B cell (primary cell): ENCODE measurements at regions of chr19 and their contacts with region 1.

Region 1: DNA sequence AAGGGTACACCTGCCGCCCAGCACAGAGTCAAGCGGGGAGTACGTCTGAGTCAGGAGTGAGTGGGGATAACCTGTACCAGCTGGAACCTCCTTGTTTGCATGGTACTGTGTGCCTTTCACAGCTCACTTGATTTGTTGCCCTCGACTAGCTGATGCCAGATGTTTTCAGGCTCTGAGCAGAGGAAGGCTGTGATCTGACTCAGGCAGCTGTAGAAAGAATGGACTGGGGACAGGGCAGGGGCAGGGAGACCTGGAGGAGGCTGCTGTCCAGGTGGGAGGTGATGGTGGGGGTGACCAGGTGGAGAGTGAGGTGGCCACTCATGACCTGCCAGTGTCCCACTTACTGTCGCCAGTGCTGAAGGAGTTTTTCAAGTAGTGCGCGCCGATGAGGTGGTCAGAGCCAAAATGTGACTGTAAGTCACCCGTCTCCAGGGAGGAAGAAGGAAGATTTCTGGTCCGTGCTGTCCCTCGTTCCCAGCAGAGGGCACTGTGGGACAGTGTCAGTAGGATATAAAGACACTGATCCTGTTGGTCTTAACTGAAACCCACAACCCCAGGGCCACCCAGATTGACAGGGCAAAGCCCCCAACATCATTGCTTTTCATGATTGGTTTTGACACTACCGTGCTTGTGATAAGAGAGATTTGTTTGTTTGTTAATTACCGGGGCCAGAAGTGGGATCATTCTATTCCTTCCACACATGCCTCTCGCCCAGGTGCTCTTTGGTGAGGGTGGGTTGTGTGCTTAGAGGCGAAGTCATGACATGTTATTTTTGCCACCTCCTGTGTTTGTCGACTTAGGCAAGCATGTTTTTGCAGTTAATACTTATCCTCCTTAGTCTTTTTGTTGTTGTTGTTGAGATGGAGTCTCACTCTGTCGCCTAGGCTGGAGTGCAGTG is 128.4 kb downstream of the DPF1 start:
- DNase-seq: peak; percentile 78
- ATAC-seq: peak; percentile 81
- H3K4me3 ChIP-seq: no peak overlapping the region
- H3K4me3 Mint-ChIP-seq: peak overlapping the region; percentile 11
- H3K27ac ChIP-seq: peak overlapping the region; percentile 18 to 69
- H3K27ac Mint-ChIP-seq: peak overlapping the region; percentile 90
- H3K4me1 ChIP-seq: peaks cover 7 to 12% of the 10 kb centered on the region in 2 donors
- H3K4me1 Mint-ChIP-seq: peaks cover 21% of the 10 kb centered on the region
- H3K27me3 ChIP-seq: no peaks in the 10 kb centered on the region
- H3K27me3 Mint-ChIP-seq: no peaks in the 10 kb centered on the region
- CTCF ChIP-seq: peak; percentile 73

Region 2: DNA sequence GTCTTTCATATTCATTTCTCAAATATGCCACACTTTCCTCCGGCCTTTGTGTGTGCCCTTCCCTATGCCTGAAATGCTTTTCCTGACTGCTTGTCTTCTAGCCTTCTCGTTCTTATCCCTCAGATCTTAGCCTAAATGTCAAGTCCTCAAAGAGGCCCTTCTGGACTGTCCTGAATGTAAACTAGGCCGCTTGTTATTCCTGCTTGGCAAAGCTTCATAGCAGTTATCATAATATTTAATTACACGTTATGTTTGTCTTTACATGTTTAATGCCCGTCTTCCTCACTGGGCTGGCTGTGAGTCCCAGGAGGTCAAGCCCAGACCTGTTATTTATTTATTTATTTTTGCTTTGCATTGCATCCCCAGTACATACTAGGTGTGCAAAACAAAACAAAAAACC is 126.0 kb before region 1 on chr19:
- CTCF ChIA-PET with region 1: interaction called, 11 read pairs
- POLR2A ChIA-PET with region 1: interaction called, 8 read pairs
- intact Hi-C with region 1: loop called (anchors 5 kb)
- DNase-seq: no peak
- ATAC-seq: no peak
- H3K4me3 ChIP-seq: no peak overlapping the region
- H3K4me3 Mint-ChIP-seq: no peak overlapping the region
- H3K27ac ChIP-seq: peak overlapping the region in 1 of 2 donors; percentile 17
- H3K27ac Mint-ChIP-seq: peak overlapping the region; percentile 64
- H3K4me1 ChIP-seq: peaks cover 41 to 53% of the 10 kb centered on the region in 2 donors
- H3K4me1 Mint-ChIP-seq: peaks cover 60% of the 10 kb centered on the region
- H3K27me3 ChIP-seq: no peaks in the 10 kb centered on the region
- H3K27me3 Mint-ChIP-seq: no peaks in the 10 kb centered on the region
- CTCF ChIP-seq: no peak

Region 3: DNA sequence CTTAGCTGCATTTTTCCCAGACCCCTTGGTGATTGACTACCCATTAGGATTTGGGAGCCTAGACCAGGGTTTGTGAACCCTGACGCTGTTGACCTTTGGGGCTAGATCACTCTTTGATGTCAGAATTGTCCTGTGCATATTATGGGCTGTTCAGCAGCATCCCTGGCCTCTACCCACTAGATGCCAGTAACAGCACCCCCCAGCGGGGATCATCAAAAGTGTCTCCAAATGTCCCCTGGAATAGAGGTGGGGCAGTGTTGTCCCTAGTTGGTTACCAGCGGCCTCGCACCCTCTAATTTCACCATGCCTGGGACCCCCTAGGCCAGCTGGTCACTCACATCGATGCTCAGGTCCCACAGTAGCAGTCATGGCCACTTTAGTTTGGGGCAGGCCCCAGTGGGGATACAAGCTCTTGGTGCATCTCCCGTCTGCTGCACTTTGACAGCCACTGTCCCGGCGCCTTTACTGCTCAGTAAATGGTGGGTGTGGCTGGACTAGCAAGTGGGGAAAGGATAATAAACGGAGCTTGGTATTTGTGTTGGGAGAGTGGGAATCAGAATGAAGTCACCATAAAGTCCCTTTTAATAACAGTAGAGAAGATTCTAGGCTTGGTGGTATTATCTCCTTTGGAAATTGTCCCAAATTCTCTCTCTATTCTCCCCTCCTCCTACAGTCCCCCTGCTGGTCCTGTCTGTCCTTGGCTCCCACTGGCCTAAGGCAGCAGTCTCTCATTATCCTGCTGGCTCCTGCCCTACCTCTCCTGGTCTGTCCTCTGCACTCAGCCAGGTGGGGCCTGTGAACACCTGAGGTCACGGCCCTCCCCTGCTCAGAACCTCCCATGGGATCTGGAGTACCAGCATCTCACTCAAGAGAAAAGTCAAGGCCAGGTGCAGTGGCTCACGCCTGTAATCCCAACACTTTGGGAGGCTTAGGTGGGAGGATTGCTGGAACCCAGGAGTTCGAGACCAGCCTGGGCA is 108.0 kb before region 1 on chr19:
- CTCF ChIA-PET with region 1: interaction called, 4 read pairs
- POLR2A ChIA-PET with region 1: no interaction called
- intact Hi-C with region 1: loop called (anchors 1 kb)
- DNase-seq: no peak
- ATAC-seq: no peak
- H3K4me3 ChIP-seq: no peak overlapping the region
- H3K4me3 Mint-ChIP-seq: no peak overlapping the region
- H3K27ac ChIP-seq: peak overlapping the region; percentile 88 to 93
- H3K27ac Mint-ChIP-seq: peak overlapping the region; percentile 99
- H3K4me1 ChIP-seq: peaks cover 75 to 91% of the 10 kb centered on the region in 2 donors
- H3K4me1 Mint-ChIP-seq: peaks cover 85% of the 10 kb centered on the region
- H3K27me3 ChIP-seq: no peaks in the 10 kb centered on the region
- H3K27me3 Mint-ChIP-seq: no peaks in the 10 kb centered on the region
- CTCF ChIP-seq: no peak

Region 4: GRCh38 chr19:38057959-38058710 is 37.5 kb before region 1 on chr19:
- CTCF ChIA-PET with region 1: interaction called, 14 read pairs
- POLR2A ChIA-PET with region 1: no interaction called
- intact Hi-C with region 1: no loop called
- DNase-seq: no peak
- ATAC-seq: no peak
- H3K4me3 ChIP-seq: no peak overlapping the region
- H3K4me3 Mint-ChIP-seq: peak overlapping the region; percentile 45
- H3K27ac ChIP-seq: peak overlapping the region; percentile 42 to 75
- H3K27ac Mint-ChIP-seq: peak overlapping the region; percentile 92
- H3K4me1 ChIP-seq: peaks cover 27 to 50% of the 10 kb centered on the region in 2 donors
- H3K4me1 Mint-ChIP-seq: peaks cover 60% of the 10 kb centered on the region
- H3K27me3 ChIP-seq: no peaks in the 10 kb centered on the region
- H3K27me3 Mint-ChIP-seq: no peaks in the 10 kb centered on the region
- CTCF ChIP-seq: no peak

Region 5: DNA sequence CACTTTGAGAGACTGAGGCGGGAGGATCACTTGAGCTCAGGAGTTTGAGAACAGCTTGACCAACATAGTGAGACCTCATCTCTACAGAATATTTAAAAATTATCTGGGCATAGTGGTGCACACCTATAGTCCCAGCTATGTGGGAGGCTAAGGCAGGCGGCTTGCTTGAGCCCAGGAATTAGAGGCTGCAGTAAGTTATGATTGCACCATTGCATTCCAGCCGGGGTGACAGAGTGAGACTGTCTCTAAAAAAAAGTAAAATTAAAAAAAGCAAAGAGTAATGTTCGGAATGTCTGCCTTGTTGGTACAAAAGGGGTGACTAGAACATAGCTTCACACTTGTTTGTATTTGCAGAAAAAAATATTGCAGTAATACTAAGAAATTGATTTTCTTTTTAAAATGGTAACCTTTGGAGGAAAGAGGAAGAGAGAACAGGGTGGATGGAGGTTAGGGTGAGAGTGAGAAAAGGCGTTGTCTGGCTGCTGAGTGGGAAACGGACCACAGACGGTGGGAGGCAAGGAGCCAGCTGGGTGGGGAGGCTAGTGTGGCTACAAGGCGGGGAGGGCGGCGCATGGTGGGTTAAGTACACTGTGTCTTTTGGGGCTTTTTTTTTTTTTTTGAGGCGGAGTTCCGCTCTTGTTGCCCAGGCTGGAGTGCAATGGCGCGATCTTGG is 150.3 kb after region 1 on chr19:
- CTCF ChIA-PET with region 1: no interaction called
- POLR2A ChIA-PET with region 1: interaction called, 12 read pairs
- intact Hi-C with region 1: no loop called
- DNase-seq: no peak
- ATAC-seq: no peak
- H3K4me3 ChIP-seq: no peak overlapping the region
- H3K4me3 Mint-ChIP-seq: no peak overlapping the region
- H3K27ac ChIP-seq: no peak overlapping the region
- H3K27ac Mint-ChIP-seq: no peak overlapping the region
- H3K4me1 ChIP-seq: peaks cover 3 to 12% of the 10 kb centered on the region in 2 donors
- H3K4me1 Mint-ChIP-seq: peaks cover 15% of the 10 kb centered on the region
- H3K27me3 ChIP-seq: no peaks in the 10 kb centered on the region
- H3K27me3 Mint-ChIP-seq: no peaks in the 10 kb centered on the region
- CTCF ChIP-seq: no peak